H1 (cell line): ENCODE measurements at regions of chr2 and their contacts with region 1.

Region 1: DNA sequence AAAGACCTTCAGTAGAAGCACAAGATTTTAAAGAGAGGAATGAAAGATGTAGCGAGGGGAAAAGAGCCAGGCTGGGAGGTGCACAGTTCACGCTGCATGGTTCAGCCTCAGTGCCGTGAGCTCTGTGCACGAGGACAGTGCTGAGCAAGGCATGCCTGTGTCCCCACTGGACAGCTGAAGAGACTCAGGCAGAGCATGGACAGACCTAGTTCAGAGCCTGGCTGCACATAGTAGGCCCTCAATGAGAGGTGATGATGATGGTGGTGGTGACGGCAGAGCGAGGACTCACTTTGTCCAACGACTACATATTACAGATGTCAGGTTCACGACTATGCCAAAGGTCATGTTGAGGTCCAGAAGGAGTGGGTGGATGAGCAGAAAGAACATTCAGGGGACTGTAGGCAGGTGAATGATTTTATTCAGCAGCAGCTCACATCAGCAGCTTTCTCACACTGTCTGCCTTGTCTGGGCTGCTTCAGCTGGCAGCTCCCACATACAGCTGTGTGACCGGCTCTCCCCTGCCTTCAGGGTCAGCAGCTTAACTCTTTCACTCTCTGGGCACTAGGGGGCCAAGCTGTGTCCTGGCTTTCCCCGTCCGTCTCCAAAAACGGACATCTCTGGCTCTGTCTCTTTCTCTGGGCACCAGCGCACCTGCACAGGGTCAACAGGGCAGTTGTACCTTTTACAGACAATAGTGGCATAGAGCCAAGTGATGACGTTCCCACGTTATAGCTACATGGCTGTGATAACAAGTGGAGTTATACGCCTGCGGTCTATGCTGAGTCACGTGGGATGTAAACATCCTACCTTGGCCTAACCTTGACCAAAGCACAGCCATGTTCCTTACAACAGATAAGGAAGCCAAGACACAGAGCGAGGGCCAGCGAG is 128.8 kb upstream of the MSH6 start:
- DNase-seq: peak in 1 of 2 experiments; percentile 68
- H3K4me3 ChIP-seq: no peak overlapping the region
- H3K27ac ChIP-seq: no peak overlapping the region
- H3K4me1 ChIP-seq: peaks cover 9 to 19% (median 17%) of the 10 kb centered on the region in 4 experiments
- H3K27me3 ChIP-seq: no peaks in the 10 kb centered on the region; a peak in 2 of 7 replicates
- CTCF ChIP-seq: peak; percentile 61 to 83 (median 73)
- EP300 ChIP-seq: no peak
- POLR2A ChIP-seq: no peak
- RAD21 ChIP-seq: peak; percentile 58 to 70

Region 2: DNA sequence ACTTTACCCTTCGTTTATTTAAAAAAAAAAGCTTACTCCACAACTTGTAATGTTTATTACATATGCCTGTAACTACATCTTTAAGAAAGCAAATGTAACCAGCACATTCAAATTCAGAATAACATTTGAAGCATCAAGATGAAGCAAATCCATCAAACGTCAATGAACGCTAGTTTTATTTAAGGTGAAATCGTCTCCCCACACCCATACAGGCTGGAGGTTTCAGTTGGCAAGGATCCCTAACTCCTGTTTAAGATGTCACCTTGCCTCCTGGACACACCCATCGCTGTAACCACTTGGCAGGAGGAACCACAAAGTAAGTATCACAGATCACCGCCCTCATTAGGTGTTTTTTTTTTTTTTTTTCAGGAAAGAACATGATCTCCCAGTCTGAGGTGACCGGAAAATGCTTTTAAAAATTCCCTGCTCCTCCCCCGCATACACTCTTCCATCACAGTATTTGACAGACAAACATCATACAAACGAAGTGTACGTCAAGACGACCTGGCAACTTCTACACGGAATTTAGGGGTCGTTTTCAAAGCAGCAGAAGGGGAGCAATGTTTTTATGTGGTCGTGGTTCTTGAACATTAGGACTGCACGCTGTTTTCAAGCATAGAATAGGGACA is 479.3 kb before region 1 on chr2:
- CTCF ChIA-PET with region 1: no interaction called
- POLR2A ChIA-PET with region 1: no interaction called
- DNase-seq: no peak
- H3K4me3 ChIP-seq: peak overlapping the region; percentile 82 to 97 (median 88)
- H3K27ac ChIP-seq: no peak overlapping the region
- H3K4me1 ChIP-seq: peaks cover 6 to 24% (median 19%) of the 10 kb centered on the region in 4 experiments; a peak in 6 of 7 replicates
- H3K27me3 ChIP-seq: no peaks in the 10 kb centered on the region
- CTCF ChIP-seq: no peak
- EP300 ChIP-seq: no peak
- POLR2A ChIP-seq: peak in 1 of 2 experiments; percentile 51; a peak in 1 of 3 replicates
- RAD21 ChIP-seq: 0 out of 4 replicates have a peak, but pooled peaks of 1 of the 2 experiments have one; percentile 1

Region 3: DNA sequence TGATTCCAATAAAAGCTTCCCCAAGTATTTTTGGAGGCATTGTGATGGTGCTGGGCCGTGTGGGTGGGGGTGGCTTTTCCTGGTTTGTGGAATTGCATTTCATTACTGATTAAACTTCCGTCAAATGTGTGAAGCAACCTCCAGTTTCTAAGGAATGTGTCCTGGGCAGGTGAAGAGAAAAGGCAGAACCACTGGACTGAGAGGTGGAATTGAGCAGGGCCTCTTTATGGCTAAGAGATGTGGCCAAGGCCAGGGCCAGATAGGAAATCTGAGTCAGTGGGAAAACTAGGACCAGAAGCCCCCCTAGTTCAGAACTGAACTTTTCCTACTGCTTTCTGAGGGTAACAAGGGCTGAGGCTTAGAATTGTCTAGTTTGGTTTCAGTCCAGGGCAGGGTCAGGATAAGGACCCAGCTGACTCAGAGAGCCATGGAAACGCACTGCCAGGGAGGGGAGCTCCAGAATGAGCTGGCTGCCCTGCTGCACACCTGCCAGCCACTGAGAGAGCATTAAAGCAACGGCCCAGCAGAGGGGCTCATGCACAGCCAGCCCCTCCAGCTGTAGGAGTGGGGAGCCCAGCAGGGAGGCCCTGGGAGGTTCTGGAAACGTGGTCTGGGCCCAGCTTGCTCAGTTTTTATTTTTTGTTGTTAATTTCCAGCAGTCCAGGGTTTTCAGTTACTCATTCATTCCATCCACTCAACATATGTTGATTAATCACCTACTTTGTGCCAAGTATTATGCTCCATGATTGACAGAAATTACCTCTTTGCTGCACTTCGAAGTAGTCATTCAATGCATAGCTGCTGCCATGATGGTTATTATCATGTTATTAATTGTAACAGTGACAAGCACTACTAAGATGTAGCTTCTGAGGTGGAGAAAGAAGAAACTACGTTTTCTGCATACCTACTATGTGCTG is 95.1 kb before region 1 on chr2:
- CTCF ChIA-PET with region 1: interaction called, 11 read pairs
- POLR2A ChIA-PET with region 1: no interaction called
- DNase-seq: no peak
- H3K4me3 ChIP-seq: no peak overlapping the region
- H3K27ac ChIP-seq: no peak overlapping the region
- H3K4me1 ChIP-seq: peaks cover 4 to 18% (median 9%) of the 10 kb centered on the region in 4 experiments
- H3K27me3 ChIP-seq: no peaks in the 10 kb centered on the region
- CTCF ChIP-seq: peak in 2 of 3 experiments; percentile 0 to 3; a peak in 2 of 4 replicates
- EP300 ChIP-seq: no peak
- POLR2A ChIP-seq: no peak
- RAD21 ChIP-seq: peak; percentile 9 to 34; a peak in 1 of 4 replicates

Region 4: GRCh38 chr2:47617028-47617427 is 37.1 kb before region 1 on chr2:
- CTCF ChIA-PET with region 1: interaction called, 12 read pairs
- POLR2A ChIA-PET with region 1: interaction called, 3 read pairs
- DNase-seq: no peak
- H3K4me3 ChIP-seq: no peak overlapping the region
- H3K27ac ChIP-seq: no peak overlapping the region
- H3K4me1 ChIP-seq: peaks cover 0 to 12% (median 7%) of the 10 kb centered on the region in 4 experiments; a peak in 3 of 7 replicates
- H3K27me3 ChIP-seq: no peaks in the 10 kb centered on the region
- CTCF ChIP-seq: no peak
- EP300 ChIP-seq: no peak
- POLR2A ChIP-seq: no peak
- RAD21 ChIP-seq: no peak

Region 5: DNA sequence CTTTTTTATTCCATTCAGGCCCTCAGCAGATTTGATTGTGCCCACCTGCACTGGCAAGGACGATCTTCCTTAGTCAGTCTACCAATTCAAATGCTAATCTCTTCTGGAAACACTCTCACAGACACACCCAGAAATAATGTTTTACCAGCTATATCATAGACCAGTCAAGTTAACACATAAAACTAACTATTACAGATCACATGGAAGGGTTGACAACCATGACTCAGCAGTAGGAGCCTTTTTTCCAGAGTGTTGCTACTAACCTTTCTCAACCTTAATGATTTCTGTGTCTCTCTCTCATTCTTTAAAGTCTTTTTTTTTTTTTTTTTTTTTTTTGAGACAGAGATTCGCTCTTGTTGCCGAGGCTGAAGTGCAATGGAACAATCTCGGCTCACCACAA is 14.7 kb before region 1 on chr2:
- CTCF ChIA-PET with region 1: interaction called, 73 read pairs
- POLR2A ChIA-PET with region 1: interaction called, 4 read pairs
- DNase-seq: no peak
- H3K4me3 ChIP-seq: no peak overlapping the region
- H3K27ac ChIP-seq: no peak overlapping the region
- H3K4me1 ChIP-seq: peaks cover 0 to 10% (median 7%) of the 10 kb centered on the region in 4 experiments; a peak in 4 of 7 replicates
- H3K27me3 ChIP-seq: peaks cover 0 to 2% (median 0%) of the 10 kb centered on the region in 4 experiments; a peak in 1 of 7 replicates
- CTCF ChIP-seq: no peak
- EP300 ChIP-seq: no peak
- POLR2A ChIP-seq: no peak
- RAD21 ChIP-seq: no peak

Region 6: GRCh38 chr2:47675196-47675825 is 21.2 kb after region 1 on chr2:
- CTCF ChIA-PET with region 1: interaction called, 64 read pairs
- POLR2A ChIA-PET with region 1: interaction called, 3 read pairs
- DNase-seq: no peak
- H3K4me3 ChIP-seq: no peak overlapping the region
- H3K27ac ChIP-seq: no peak overlapping the region
- H3K4me1 ChIP-seq: peaks cover 0 to 9% (median 5%) of the 10 kb centered on the region in 4 experiments; a peak in 3 of 7 replicates
- H3K27me3 ChIP-seq: no peaks in the 10 kb centered on the region
- CTCF ChIP-seq: no peak
- EP300 ChIP-seq: no peak
- POLR2A ChIP-seq: no peak
- RAD21 ChIP-seq: no peak

Region 7: GRCh38 chr2:47697000-47697601 is 43.0 kb after region 1 on chr2:
- CTCF ChIA-PET with region 1: interaction called, 10 read pairs
- POLR2A ChIA-PET with region 1: interaction called, 9 read pairs
- DNase-seq: no peak
- H3K4me3 ChIP-seq: peak overlapping the region in 1 of 4 experiments; percentile 46; a peak in 1 of 8 replicates
- H3K27ac ChIP-seq: peak overlapping the region; percentile 81
- H3K4me1 ChIP-seq: peaks cover 11 to 33% (median 20%) of the 10 kb centered on the region in 4 experiments; a peak in 6 of 7 replicates
- H3K27me3 ChIP-seq: no peaks in the 10 kb centered on the region
- CTCF ChIP-seq: no peak
- EP300 ChIP-seq: no peak
- POLR2A ChIP-seq: no peak
- RAD21 ChIP-seq: no peak

Region 8: DNA sequence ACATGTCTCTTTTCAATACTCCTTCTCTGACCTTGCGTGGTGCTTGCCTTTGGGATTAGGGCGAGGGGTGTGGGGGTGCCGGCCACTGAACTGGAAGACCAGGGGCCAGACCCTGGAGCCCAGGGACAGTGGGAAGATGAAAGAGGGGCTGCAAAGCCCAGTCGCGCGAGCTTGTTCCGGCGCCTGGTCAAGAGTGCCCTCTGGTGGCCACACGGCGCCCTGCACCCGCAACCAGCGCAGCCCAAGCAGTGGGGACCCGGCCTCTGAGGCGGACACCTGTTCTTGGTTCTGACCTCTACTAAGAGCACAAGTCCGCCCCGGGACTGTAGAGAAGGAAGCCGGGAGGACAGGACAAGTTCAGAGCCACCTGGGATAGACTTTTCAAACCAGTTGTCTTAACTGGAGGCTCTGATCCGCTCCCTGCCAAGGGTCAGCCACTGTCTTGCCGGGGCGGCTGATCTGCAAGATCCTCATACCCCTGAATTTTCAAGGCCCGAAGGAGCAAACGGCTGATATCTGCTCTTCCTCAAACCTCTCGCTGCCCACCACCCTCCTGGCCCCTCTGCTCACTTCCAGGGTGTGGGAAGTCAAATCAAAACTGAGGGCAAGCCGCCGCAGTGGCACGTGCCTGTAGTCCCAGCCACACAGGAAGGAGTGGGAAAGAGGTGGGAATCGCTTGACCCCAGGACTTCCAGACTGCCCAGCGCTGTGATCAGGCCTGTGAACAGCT is 113.9 kb after region 1 on chr2:
- CTCF ChIA-PET with region 1: interaction called, 22 read pairs
- POLR2A ChIA-PET with region 1: interaction called, 4 read pairs
- DNase-seq: peak; percentile 54 to 99
- H3K4me3 ChIP-seq: no peak overlapping the region
- H3K27ac ChIP-seq: no peak overlapping the region
- H3K4me1 ChIP-seq: no peaks in the 10 kb centered on the region
- H3K27me3 ChIP-seq: no peaks in the 10 kb centered on the region
- CTCF ChIP-seq: peak; percentile 93 to 98 (median 95)
- EP300 ChIP-seq: no peak
- POLR2A ChIP-seq: no peak
- RAD21 ChIP-seq: peak; percentile 100

Region 9: DNA sequence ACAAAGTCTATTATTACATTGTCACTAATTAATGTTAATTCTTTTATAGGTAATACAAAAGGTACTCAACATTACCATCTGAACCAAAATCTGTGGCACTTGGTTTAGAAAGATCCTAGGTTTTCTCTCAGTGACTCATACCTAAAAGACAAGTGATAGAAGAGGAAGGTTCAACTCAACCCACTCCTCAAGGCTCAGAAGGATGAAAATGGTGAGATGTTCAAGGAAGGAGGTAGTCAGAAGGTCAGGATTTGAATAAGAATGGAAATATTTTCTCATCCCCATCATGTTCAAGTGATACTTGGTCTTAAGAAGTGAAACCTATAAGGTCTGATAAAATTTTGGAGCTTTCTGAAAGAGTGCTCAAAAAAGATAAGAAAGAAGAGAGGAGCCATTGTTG is 338.5 kb after region 1 on chr2:
- CTCF ChIA-PET with region 1: no interaction called
- POLR2A ChIA-PET with region 1: no interaction called
- DNase-seq: no peak
- H3K4me3 ChIP-seq: no peak overlapping the region
- H3K27ac ChIP-seq: no peak overlapping the region
- H3K4me1 ChIP-seq: no peaks in the 10 kb centered on the region
- H3K27me3 ChIP-seq: no peaks in the 10 kb centered on the region
- CTCF ChIP-seq: no peak
- EP300 ChIP-seq: no peak
- POLR2A ChIP-seq: no peak
- RAD21 ChIP-seq: no peak